ENCODE measurements at regions of chr2 and their contacts with region 1.

Region 1: DNA sequence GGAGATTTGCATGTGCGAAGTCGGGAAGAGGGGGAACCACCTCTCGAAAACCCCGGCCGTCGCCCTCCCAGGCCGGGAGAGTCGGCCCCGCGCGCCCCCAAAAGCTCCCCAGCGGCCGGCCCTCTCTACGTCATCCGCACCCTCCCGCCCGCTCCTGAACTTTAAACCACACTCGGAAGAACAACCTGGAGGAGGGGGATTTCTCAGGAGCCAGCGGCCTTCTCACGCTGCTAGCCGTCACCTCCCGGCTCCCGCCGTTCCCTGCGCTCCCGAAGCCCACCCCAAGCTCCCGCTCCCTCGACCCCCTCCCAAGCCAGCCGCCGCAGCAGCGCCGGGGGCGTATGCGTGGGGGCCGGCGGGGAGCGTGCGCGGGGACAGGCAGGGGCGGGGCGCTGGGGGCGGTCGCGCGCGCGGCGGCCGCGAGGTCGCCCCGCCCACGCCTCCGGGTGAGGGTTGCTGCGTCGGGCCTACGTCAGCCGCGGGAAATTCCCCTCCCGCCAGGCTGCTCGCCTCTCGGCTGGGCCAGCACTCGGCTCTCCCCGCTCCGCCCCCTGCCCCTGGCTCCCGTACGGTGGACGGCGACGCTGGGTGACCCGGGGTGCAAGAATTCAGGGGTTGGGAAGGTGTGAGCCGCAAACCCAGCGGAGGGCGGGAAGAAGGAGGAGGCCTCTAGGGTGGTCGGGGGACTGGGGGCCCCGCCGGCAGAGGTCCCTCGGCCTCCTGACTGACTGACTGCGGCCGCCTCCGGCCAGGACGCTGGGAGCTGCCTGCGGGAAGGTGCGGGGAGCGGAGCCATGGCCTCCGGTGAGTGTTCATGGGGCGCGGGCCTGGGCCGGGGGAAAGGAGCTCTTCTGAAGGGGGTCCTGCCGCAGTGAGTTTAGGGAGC is at the start of gene REL:
- DNase-seq: peak; percentile 77 to 95 (median 88)
- ATAC-seq: peak; percentile 92
- H3K4me3 ChIP-seq: peak within 1 kb of the TSS; percentile 83
- H3K4me3 Mint-ChIP-seq: peak within 1 kb of the TSS; percentile 91 to 98 (median 96)
- H3K27ac ChIP-seq: peak within 1 kb of the TSS; percentile 100
- H3K27ac Mint-ChIP-seq: peak within 1 kb of the TSS; percentile 93 to 100 (median 98)
- H3K4me1 ChIP-seq: peaks cover 11 to 24% of the 10 kb centered on the region in 2 donors
- H3K4me1 Mint-ChIP-seq: peaks cover 22 to 39% (median 33%) of the 10 kb centered on the region in 7 donors
- H3K27me3 ChIP-seq: no peaks in the 10 kb centered on the region
- H3K27me3 Mint-ChIP-seq: no peaks in the 10 kb centered on the region
- total RNA-seq, gene REL: 18.9 to 78.8 (median 26.4) TPM

Region 2: DNA sequence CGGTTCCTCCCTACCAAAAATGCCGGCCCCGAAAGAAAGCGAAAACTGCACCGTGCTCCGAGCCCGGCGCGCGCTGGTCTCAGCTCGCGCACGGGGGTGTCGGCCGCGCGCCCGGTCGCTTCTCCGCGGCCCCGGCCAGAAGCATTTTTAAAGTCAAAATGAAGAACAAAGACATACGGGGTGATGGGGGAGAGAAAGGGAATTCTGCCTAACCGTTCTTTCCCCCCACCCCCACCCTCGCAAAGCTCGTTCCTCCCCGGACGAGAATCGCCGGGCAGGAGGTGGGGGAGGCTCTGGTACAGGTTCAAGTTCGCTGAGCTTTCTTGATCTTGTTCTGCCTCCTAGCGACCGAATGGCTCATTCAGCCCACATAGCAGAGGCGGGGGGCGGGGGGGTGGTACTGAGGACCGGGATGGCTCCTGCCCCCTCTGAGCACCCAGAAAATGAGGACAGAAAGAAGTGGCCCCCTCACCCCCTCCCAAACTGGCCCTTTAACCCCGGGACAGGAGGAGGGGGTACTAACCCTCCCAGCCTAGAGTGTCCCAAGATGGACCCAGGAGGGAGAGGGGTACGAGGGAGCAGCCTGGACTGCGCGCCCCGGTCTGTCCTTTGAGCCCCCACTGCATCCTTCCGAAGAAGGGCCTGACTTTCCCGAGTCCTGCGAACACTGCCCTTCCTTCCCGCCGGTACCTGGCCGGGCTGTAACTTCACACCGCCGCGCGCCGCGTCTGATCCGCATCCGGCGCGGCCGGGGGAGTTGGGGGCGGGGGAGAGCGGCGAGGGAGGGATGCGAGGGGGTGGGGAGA is 330.9 kb before region 1 on chr2:
- CTCF ChIA-PET with region 1: no interaction called
- POLR2A ChIA-PET with region 1: no interaction called
- intact Hi-C with region 1: loop called in 1 of 2 experiments (anchors 5 kb)
- DNase-seq: peak in 8 of 9 donors; percentile 23 to 67 (median 50)
- ATAC-seq: peak; percentile 71
- H3K4me3 ChIP-seq: peak overlapping the region; percentile 70
- H3K4me3 Mint-ChIP-seq: peak overlapping the region; percentile 80 to 93 (median 90)
- H3K27ac ChIP-seq: peak overlapping the region; percentile 39
- H3K27ac Mint-ChIP-seq: peak overlapping the region in 6 of 9 donors; percentile 29 to 89 (median 68)
- H3K4me1 ChIP-seq: peaks cover 9 to 17% of the 10 kb centered on the region in 2 donors
- H3K4me1 Mint-ChIP-seq: peaks cover 11 to 57% (median 34%) of the 10 kb centered on the region in 7 donors
- H3K27me3 ChIP-seq: peaks cover 10 to 39% of the 10 kb centered on the region in 2 donors
- H3K27me3 Mint-ChIP-seq: peaks cover 46 to 87% (median 55%) of the 10 kb centered on the region in 5 donors

Region 3: DNA sequence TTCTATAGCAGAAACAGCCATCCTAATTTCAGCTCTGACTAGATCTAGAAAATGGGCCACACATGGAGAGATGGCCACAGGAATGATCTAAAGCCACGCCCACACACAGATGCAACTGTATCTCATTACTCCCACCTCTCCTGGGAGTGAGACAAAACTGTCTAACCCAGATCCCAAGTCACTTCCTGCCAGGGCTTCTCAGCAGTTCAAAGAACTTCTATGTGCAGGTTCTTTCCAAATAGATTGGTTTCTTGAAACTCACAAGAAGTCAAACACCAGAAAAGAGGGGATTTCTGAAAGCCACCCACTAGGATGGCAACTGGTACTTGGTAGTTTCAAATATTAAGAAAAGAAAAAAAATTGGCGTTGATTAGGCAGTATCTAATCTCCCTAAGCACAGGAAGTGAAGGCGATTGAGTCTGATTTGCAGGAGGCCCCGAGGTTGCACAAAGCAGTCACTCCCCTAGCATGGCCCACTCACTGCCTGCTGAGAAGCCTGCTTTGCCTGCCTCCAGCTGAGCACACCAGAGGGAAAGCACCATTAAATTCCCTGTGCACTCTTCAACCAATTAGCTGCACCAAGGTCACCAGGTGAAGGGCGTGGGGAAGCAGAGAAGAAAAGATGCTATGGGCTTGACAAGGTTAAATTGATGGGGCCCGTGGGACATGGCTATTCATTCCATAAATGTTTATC is 74.2 kb before region 1 on chr2:
- CTCF ChIA-PET with region 1: interaction called, 9 read pairs
- POLR2A ChIA-PET with region 1: interaction called, 10 read pairs
- intact Hi-C with region 1: loop called in 1 of 2 experiments (anchors 1 kb)
- DNase-seq: peak in 5 of 9 donors; percentile 15 to 53 (median 20)
- ATAC-seq: peak; percentile 65
- H3K4me3 ChIP-seq: no peak overlapping the region
- H3K4me3 Mint-ChIP-seq: peak overlapping the region; percentile 15 to 73 (median 52)
- H3K27ac ChIP-seq: peak overlapping the region; percentile 57
- H3K27ac Mint-ChIP-seq: peak overlapping the region; percentile 7 to 88 (median 73)
- H3K4me1 ChIP-seq: peaks cover 19 to 23% of the 10 kb centered on the region in 2 donors
- H3K4me1 Mint-ChIP-seq: peaks cover 28 to 51% (median 44%) of the 10 kb centered on the region in 7 donors
- H3K27me3 ChIP-seq: no peaks in the 10 kb centered on the region
- H3K27me3 Mint-ChIP-seq: no peaks in the 10 kb centered on the region

Region 4: DNA sequence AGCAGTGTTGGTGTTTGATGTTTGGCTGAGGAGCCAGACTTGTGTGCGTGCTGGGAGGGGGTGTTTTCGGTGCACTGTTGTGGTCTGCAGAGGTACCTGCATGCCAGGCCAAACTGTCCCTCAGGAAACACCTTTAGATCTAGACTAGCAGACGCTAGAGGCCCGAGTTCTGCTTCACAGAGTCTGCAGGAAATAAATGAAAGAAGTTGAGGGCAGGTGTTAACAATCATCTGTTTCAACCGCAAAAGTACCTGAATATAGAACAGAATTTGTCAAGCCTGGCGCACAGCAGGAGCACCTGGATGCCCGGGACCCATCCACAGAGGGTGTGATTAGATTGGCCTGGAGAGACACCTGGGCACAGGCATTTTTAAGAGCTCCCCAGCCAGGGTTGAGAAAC is 40.4 kb before region 1 on chr2:
- CTCF ChIA-PET with region 1: no interaction called
- POLR2A ChIA-PET with region 1: no interaction called
- intact Hi-C with region 1: no loop called
- DNase-seq: peak in 3 of 9 donors; percentile 4 to 12 (median 12)
- ATAC-seq: peak; percentile 65
- H3K4me3 ChIP-seq: no peak overlapping the region
- H3K4me3 Mint-ChIP-seq: peak overlapping the region in 5 of 10 donors; percentile 11 to 57 (median 36)
- H3K27ac ChIP-seq: no peak overlapping the region
- H3K27ac Mint-ChIP-seq: peak overlapping the region in 6 of 9 donors; percentile 30 to 73 (median 57)
- H3K4me1 ChIP-seq: peaks cover 10% of the 10 kb centered on the region in 2 donors
- H3K4me1 Mint-ChIP-seq: peaks cover 10 to 23% (median 12%) of the 10 kb centered on the region in 7 donors
- H3K27me3 ChIP-seq: no peaks in the 10 kb centered on the region
- H3K27me3 Mint-ChIP-seq: no peaks in the 10 kb centered on the region

Region 5: DNA sequence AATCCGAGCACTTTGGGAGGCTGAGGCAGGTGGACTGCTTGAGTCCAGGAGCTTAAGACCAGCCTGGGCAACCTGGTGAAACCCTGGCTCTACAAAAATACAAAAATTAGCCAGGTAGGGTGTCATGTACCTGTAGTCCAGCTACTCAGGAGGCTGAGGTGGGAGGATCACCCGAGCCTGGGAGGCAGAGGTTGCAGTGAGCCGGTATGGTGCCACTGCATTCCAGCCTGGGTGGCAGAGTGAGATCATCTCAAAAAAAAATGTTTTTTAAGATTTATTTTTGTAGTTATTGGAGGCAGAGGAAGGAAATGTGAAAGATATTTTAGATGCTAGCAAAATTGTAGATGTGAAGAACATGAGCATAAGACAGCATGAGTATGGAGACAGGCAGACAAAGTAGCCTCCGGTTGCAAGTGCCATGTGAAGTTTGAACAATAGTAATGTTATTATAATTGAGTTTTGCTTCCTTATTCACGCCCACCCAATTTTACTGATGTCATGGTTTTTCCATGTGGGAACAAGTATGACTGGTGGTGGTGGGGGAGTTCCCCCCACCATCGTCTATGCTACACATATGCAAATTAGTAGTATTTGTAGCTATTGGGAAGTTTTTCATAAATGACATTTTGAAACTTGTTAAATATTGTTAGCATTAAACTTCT is 18.1 kb after region 1 on chr2:
- CTCF ChIA-PET with region 1: interaction called, 3 read pairs
- POLR2A ChIA-PET with region 1: interaction called, 3 read pairs
- intact Hi-C with region 1: loop called (anchors 2 kb)
- DNase-seq: peak in 1 of 9 donors; percentile 54
- ATAC-seq: peak; percentile 19
- H3K4me3 ChIP-seq: no peak overlapping the region
- H3K4me3 Mint-ChIP-seq: no peak overlapping the region
- H3K27ac ChIP-seq: no peak overlapping the region
- H3K27ac Mint-ChIP-seq: peak overlapping the region in 3 of 9 donors; percentile 52 to 82 (median 69)
- H3K4me1 ChIP-seq: peaks cover 0 to 3% of the 10 kb centered on the region in 2 donors
- H3K4me1 Mint-ChIP-seq: peaks cover 2 to 24% (median 9%) of the 10 kb centered on the region in 7 donors
- H3K27me3 ChIP-seq: no peaks in the 10 kb centered on the region
- H3K27me3 Mint-ChIP-seq: no peaks in the 10 kb centered on the region

Region 6: GRCh38 chr2:61016808-61017555 is 135.7 kb after region 1 on chr2:
- CTCF ChIA-PET with region 1: no interaction called
- POLR2A ChIA-PET with region 1: no interaction called
- intact Hi-C with region 1: loop called (anchors 1 kb)
- DNase-seq: peak; percentile 41 to 75 (median 72)
- ATAC-seq: peak; percentile 79
- H3K4me3 ChIP-seq: peak overlapping the region; percentile 100
- H3K4me3 Mint-ChIP-seq: peak overlapping the region; percentile 93 to 100 (median 97)
- H3K27ac ChIP-seq: peak overlapping the region; percentile 75
- H3K27ac Mint-ChIP-seq: peak overlapping the region; percentile 90 to 99 (median 95)
- H3K4me1 ChIP-seq: peaks cover 14 to 20% of the 10 kb centered on the region in 2 donors
- H3K4me1 Mint-ChIP-seq: peaks cover 23 to 68% (median 48%) of the 10 kb centered on the region in 7 donors
- H3K27me3 ChIP-seq: no peaks in the 10 kb centered on the region
- H3K27me3 Mint-ChIP-seq: no peaks in the 10 kb centered on the region

Region 7: DNA sequence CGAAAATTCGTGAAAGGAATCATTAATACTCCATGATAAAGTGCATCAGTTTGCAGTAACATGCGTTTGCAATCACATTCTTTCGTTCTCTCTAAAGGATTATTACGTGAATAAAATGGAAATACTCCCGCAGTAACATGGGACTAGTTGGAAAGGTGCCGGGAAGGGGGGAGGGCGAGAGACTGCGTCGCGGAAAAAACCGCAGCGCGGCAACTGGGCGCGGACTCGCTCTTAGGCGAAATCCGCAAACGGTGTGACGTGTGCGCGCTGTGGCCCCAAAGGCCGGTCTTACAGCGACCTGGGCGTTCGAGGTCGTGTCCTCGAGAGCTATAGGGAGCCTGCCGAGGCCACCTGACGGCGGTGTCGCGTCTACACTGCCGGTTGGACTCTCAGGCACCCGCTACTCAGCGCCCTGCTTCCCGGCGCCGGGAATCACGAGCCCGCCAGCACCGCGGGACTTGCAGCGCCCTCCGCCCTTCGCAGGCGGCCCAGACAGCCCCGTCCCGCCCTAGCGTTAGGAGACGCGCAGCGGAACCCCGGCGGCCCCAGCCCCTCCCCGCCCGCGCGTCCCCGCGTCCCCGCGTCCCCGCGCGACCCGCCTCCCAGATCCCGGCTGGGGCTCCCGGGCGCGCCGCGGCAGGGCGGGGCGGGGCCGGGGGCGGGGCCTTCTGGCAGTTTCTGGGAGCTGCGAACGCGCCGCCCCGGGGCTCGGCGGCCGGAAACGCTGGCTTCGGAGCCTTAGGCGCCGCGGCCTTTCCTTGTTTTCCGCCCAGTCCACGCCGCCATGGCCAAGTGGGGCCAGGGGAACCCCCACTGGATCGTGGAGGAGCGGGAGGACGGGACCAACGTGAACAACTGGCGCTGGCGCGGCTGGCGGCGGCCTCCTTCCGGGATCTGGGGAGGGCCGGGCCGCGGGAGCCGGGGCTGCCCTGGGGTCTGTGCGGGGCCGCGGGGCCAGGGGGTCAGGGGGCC is 295.8 kb after region 1 on chr2:
- CTCF ChIA-PET with region 1: no interaction called
- POLR2A ChIA-PET with region 1: interaction called, 3 read pairs
- intact Hi-C with region 1: loop called (anchors 1 to 2 kb)
- DNase-seq: peak; percentile 89 to 97 (median 93)
- ATAC-seq: peak; percentile 95
- H3K4me3 ChIP-seq: peak overlapping the region; percentile 82
- H3K4me3 Mint-ChIP-seq: peak overlapping the region; percentile 90 to 100 (median 94)
- H3K27ac ChIP-seq: peak overlapping the region; percentile 97
- H3K27ac Mint-ChIP-seq: peak overlapping the region; percentile 89 to 97 (median 95)
- H3K4me1 ChIP-seq: peaks cover 27 to 41% of the 10 kb centered on the region in 2 donors
- H3K4me1 Mint-ChIP-seq: peaks cover 38 to 53% (median 48%) of the 10 kb centered on the region in 7 donors
- H3K27me3 ChIP-seq: no peaks in the 10 kb centered on the region
- H3K27me3 Mint-ChIP-seq: peaks cover 0 to 8% (median 0%) of the 10 kb centered on the region in 5 donors

Region 8: DNA sequence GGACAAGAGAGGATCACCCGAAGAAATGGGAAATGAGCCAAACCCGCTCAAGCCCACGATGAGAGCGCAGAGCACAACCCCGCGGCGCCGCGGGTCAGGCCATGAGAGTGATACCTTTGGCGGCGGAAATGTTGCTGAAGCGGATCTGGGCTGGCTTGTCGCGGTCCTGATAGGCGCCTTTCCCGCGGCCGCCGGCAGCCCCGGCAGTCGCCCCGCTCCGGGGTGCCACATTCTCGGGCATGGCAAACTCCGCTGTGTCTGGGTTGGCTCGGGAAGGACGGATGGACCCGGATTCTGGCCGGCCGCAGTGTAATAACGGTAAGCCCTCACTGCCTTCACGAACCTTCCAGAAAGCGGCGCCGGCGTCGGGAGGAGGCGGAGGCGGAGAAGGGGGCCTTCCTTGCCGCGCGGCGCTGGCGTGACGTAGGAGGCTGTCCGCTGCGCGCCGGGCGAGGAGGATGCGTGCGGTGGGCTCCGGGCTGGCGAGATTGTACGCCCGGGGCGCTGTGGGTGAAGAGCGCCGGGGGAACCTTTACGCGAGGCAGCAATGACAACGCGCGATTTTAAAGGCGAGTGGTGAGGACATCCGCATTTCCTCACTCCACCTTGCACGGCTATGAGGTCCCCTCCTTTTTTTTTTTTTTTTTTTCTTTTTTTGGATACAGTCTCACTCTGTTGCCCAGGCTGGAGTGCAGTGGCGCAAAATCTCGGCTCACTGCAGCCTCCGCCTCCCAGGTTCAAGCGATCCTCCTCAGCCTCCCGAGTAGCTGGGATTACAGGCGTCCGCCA is 1007.2 kb after region 1 on chr2 and contains the start of gene CCT4:
- CTCF ChIA-PET with region 1: no interaction called
- POLR2A ChIA-PET with region 1: no interaction called
- intact Hi-C with region 1: loop called (anchors 1 to 5 kb)
- DNase-seq: peak; percentile 86 to 99 (median 95)
- ATAC-seq: peak; percentile 94
- H3K4me3 ChIP-seq: peak within 1 kb of the TSS; percentile 92
- H3K4me3 Mint-ChIP-seq: peak within 1 kb of the TSS; percentile 85 to 100 (median 99)
- H3K27ac ChIP-seq: peak within 1 kb of the TSS; percentile 98
- H3K27ac Mint-ChIP-seq: peak within 1 kb of the TSS; percentile 98 to 100 (median 100)
- H3K4me1 ChIP-seq: peaks cover 15 to 17% of the 10 kb centered on the region in 2 donors
- H3K4me1 Mint-ChIP-seq: peaks cover 11 to 34% (median 29%) of the 10 kb centered on the region in 7 donors
- H3K27me3 ChIP-seq: no peaks in the 10 kb centered on the region
- H3K27me3 Mint-ChIP-seq: no peaks in the 10 kb centered on the region
- total RNA-seq, gene CCT4: 84.2 to 177 (median 90.3) TPM